Sigmoid colon (tissue), 7 donors: ENCODE measurements at regions of chr12 and their contacts with region 1.

Region 1: GRCh38 chr12:110141389-110141788 is 17.2 kb downstream of the IFT81 start:
- DNase-seq: peak; percentile 91
- H3K4me3 ChIP-seq: no peak overlapping the region
- H3K27ac ChIP-seq: peak overlapping the region; percentile 59 to 69 (median 64)
- H3K4me1 ChIP-seq: peaks cover 0 to 15% (median 9%) of the 10 kb centered on the region in 4 donors
- H3K27me3 ChIP-seq: no peaks in the 10 kb centered on the region
- CTCF ChIP-seq: no peak
- EP300 ChIP-seq: peak in 2 of 4 donors; percentile 31 to 57
- POLR2A ChIP-seq: no peak

Region 2: DNA sequence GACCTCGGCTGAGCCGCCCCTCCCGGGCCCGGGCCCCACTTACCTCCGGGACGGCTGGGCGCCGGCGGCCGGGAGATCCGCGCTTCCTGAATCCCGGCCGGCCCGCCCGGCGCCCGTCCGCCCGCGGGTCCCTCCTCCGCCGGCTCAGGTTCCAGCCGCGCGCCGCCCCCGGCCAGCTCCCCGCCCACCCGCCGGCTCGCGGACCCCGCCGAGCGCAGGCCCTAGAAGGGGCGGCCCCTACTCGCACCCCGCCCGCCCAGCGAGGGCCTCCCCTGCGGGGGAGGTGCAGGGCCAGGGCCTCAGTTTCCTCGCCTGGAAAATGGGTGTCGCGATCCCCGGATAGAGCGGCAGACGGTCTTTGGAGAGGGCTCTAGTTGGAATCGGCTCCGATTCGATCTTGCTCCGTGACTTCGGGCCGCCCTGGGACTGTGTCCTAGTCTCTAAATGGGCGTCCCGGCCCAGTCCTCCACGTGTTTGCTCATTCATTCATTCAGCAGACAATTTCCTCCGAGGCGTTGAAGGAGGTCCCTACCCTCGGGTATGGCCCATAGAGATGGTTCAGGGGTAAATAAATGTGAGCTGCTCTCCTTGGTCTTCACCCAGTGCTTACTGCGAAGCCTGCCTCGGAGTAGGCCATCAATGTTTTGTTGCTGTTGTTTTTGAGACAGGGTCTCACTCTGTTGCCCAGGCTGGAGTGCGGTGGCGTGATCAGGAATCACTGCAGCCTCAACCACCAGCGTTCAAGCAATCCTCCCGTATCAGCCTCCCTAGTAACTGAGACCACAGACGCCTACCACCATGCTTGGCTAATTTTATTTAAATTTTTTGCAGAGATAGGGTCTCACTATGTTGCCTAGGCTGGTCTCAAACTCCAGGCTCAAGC is 307.8 kb before region 1 on chr12 and contains the start of gene TRPV4:
- intact Hi-C with region 1: no loop called
- DNase-seq: no peak
- H3K4me3 ChIP-seq: peak within 1 kb of the TSS; percentile 18 to 52 (median 42)
- H3K27ac ChIP-seq: no peak within 1 kb of the TSS
- H3K4me1 ChIP-seq: peaks cover 0 to 8% (median 6%) of the 10 kb centered on the region in 4 donors
- H3K27me3 ChIP-seq: peaks cover 12 to 39% (median 20%) of the 10 kb centered on the region in 3 donors
- CTCF ChIP-seq: no peak
- EP300 ChIP-seq: no peak
- POLR2A ChIP-seq: no peak
- total RNA-seq, gene TRPV4: 0.14 to 0.55 (median 0.36) TPM in 3 of 4 donors, not detected in the other

Region 3: GRCh38 chr12:110109037-110109836 is 32.2 kb before region 1 on chr12:
- intact Hi-C with region 1: loop called (anchors 5 kb)
- DNase-seq: peak; percentile 98
- H3K4me3 ChIP-seq: peak overlapping the region in 3 of 4 donors; percentile 13 to 20 (median 18)
- H3K27ac ChIP-seq: peak overlapping the region; percentile 85 to 95 (median 91)
- H3K4me1 ChIP-seq: peaks cover 0 to 67% (median 44%) of the 10 kb centered on the region in 4 donors
- H3K27me3 ChIP-seq: no peaks in the 10 kb centered on the region
- CTCF ChIP-seq: peak in 2 of 4 experiments; percentile 30 to 62
- EP300 ChIP-seq: peak; percentile 75 to 88 (median 79)
- POLR2A ChIP-seq: peak in 1 of 2 donors; percentile 26

Region 4: DNA sequence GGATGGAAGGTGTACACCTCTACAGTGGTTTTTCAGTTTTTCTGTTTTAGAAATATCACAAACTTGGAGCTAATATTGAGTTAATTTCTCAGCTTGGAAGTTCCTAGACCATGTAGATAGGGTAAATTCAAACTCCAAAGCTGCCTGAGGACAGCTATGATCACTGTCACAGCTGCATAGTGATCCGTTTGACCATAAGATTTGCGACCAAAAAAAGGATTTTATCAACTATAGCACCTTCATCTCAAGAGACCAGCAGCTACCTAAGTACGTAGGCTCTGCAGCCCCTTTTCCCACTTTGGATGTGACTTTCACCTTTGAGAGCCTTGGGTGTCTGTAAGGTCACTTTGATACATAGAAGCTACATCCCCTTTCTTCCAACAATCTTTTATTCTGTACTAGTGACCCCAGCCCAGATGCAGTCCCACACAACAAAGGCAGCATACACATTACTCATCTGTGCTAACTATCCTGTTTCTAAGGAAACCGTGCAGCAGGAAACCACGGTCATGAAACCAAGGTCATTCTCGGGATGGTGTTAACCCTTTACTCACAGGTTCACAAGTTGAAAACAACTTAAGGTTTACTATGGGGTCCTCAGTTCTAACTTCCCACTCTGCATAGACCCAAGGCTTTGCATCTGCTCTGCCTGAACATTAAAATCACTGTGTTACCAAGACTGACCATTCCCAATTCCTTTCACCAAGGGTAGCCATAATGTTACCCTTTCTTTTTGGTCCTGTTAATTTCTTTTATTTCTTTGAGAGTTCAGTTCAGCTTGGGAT is 58.1 kb after region 1 on chr12:
- intact Hi-C with region 1: loop called (anchors 10 kb)
- DNase-seq: no peak
- H3K4me3 ChIP-seq: no peak overlapping the region
- H3K27ac ChIP-seq: no peak overlapping the region
- H3K4me1 ChIP-seq: no peaks in the 10 kb centered on the region
- H3K27me3 ChIP-seq: no peaks in the 10 kb centered on the region
- CTCF ChIP-seq: no peak
- EP300 ChIP-seq: no peak
- POLR2A ChIP-seq: no peak